MCF 10A (cell line): ENCODE measurements at regions of chr9 and their contacts with region 1.

Region 1: GRCh38 chr9:34437006-34437925 is 21.1 kb downstream of the FAM219A start:
- DNase-seq: peak; percentile 81
- H3K4me3 Mint-ChIP-seq: no peak overlapping the region
- H3K27ac Mint-ChIP-seq: no peak overlapping the region
- H3K4me1 Mint-ChIP-seq: no peaks in the 10 kb centered on the region
- H3K27me3 Mint-ChIP-seq: no peaks in the 10 kb centered on the region
- CTCF ChIP-seq: peak; percentile 74

Region 2: GRCh38 chr9:34158362-34158869 is 278.9 kb before region 1 on chr9:
- CTCF ChIA-PET with region 1: no interaction called
- POLR2A ChIA-PET with region 1: no interaction called
- intact Hi-C with region 1: no loop called
- DNase-seq: peak; percentile 84
- H3K4me3 Mint-ChIP-seq: no peak overlapping the region
- H3K27ac Mint-ChIP-seq: peak overlapping the region; percentile 57
- H3K4me1 Mint-ChIP-seq: peaks cover 20% of the 10 kb centered on the region
- H3K27me3 Mint-ChIP-seq: no peaks in the 10 kb centered on the region
- CTCF ChIP-seq: no peak

Region 3: GRCh38 chr9:34197756-34198711 is 239.2 kb before region 1 on chr9:
- CTCF ChIA-PET with region 1: no interaction called
- POLR2A ChIA-PET with region 1: no interaction called
- intact Hi-C with region 1: no loop called
- DNase-seq: no peak
- H3K4me3 Mint-ChIP-seq: no peak overlapping the region
- H3K27ac Mint-ChIP-seq: peak overlapping the region; percentile 23
- H3K4me1 Mint-ChIP-seq: peaks cover 32% of the 10 kb centered on the region
- H3K27me3 Mint-ChIP-seq: no peaks in the 10 kb centered on the region
- CTCF ChIP-seq: no peak

Region 4: DNA sequence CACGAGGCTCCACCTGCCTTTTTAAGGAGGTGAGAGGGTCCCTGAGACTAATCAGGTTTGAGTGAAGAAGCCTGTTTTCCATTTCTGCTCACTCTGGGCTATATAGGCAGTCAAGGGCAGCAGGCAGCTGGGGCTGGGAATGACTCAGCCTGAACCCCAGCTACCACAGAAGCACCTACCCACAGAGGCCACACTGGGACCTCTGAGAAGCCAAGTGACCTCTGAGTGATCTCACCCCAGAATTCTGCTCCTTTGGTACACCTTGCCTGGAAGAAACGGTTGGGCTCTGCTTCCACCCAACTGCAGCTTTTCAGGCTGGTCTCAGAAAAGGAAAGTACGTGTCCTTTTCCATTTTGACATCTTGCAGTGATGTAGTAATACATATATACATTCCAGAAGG is 14.3 kb after region 1 on chr9:
- CTCF ChIA-PET with region 1: interaction called, 14 read pairs
- POLR2A ChIA-PET with region 1: interaction called, 3 read pairs
- intact Hi-C with region 1: no loop called
- DNase-seq: no peak
- H3K4me3 Mint-ChIP-seq: no peak overlapping the region
- H3K27ac Mint-ChIP-seq: peak overlapping the region; percentile 12
- H3K4me1 Mint-ChIP-seq: peaks cover 12% of the 10 kb centered on the region
- H3K27me3 Mint-ChIP-seq: no peaks in the 10 kb centered on the region
- CTCF ChIP-seq: no peak

Region 5: GRCh38 chr9:34492051-34492450 is 54.8 kb after region 1 on chr9:
- CTCF ChIA-PET with region 1: interaction called, 12 read pairs
- POLR2A ChIA-PET with region 1: interaction called, 4 read pairs
- intact Hi-C with region 1: no loop called
- DNase-seq: no peak
- H3K4me3 Mint-ChIP-seq: no peak overlapping the region
- H3K27ac Mint-ChIP-seq: no peak overlapping the region
- H3K4me1 Mint-ChIP-seq: no peaks in the 10 kb centered on the region
- H3K27me3 Mint-ChIP-seq: peaks cover 48% of the 10 kb centered on the region
- CTCF ChIP-seq: no peak